ENCODE measurements at regions of chr6 and their contacts with region 1.

Region 1: DNA sequence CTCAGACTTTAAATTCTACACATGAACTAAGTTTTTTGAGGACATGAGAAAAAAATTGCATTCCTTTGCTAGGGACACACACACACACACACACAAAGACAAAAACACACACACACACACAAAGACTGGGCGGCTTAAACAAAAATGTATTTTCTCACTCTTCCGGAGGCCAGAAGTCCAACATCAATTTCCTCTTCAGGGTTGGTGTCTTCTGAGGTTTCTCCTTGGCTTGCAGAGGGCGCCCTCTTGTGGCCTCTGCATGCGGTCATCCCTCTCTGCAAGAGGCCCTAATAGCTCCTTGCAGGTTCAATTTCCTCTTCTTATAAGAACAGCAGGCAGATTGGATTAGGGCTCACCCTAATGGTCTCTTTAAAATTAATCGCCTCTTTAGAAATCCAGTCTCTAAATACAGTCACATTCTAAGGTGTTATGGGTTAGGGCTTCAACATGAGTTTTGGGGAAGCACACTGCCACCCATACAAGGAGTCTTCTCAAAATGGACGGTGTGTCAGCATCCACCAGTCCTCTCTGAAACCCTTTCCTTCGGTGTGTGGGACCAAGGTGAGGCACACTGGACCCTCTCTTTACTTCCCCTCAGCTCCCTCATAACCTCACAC is 61.4 kb downstream of the GPR6 start:
- DNase-seq: peak; percentile 65
- ATAC-seq: peak; percentile 96
- H3K4me3 ChIP-seq: peak overlapping the region; percentile 73
- H3K27ac ChIP-seq: peak overlapping the region; percentile 17; the same call in 1 of the 2 replicates
- H3K4me1 ChIP-seq: peaks cover 3% of the 10 kb centered on the region
- H3K27me3 ChIP-seq: no peaks in the 10 kb centered on the region
- CTCF ChIP-seq: peak; percentile 90 to 97 (median 92)
- EP300 ChIP-seq: no peak
- POLR2A ChIP-seq: no peak; the same call in 1 of the 2 replicates
- RAD21 ChIP-seq: peak; percentile 98

Region 2: DNA sequence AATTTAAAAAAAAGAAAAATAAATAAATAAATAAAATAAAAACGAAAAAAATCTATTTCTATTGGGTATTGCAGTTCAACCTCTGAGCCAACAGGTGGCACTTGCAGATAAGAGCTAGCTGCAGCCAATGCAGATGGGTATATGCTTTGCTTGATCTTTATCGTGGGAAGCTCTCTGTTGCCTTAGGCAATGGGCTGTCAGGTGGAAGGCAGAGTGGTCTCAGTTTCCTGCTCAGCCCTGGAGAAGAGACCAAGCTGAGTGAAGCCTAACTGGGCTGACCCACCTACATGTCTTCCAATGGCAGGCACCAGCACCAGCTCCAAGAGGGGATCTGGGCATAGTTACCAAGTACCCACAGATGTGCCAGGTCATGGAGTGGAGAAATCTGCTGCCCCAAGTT is 443.5 kb before region 1 on chr6:
- CTCF ChIA-PET with region 1: interaction called, 28 read pairs
- POLR2A ChIA-PET with region 1: interaction called, 3 read pairs
- RAD21 ChIA-PET with region 1: interaction called, 10 read pairs
- SMC1A ChIA-PET with region 1: interaction called, 4 read pairs
- in situ Hi-C with region 1: no loop called
- intact Hi-C with region 1: loop called (anchors 1 kb)
- DNase-seq: no peak
- ATAC-seq: peak; percentile 66
- H3K4me3 ChIP-seq: no peak overlapping the region
- H3K27ac ChIP-seq: no peak overlapping the region
- H3K4me1 ChIP-seq: no peaks in the 10 kb centered on the region
- H3K27me3 ChIP-seq: no peaks in the 10 kb centered on the region
- CTCF ChIP-seq: peak; percentile 37 to 45 (median 45); a peak in 5 of 6 replicates
- EP300 ChIP-seq: no peak
- POLR2A ChIP-seq: no peak
- RAD21 ChIP-seq: peak; percentile 84

Region 3: GRCh38 chr6:109713097-109713496 is 326.4 kb before region 1 on chr6:
- CTCF ChIA-PET with region 1: interaction called, 24 read pairs
- POLR2A ChIA-PET with region 1: no interaction called
- RAD21 ChIA-PET with region 1: interaction called, 15 read pairs
- SMC1A ChIA-PET with region 1: interaction called, 20 read pairs
- in situ Hi-C with region 1: no loop called
- intact Hi-C with region 1: no loop called
- DNase-seq: no peak
- ATAC-seq: no peak
- H3K4me3 ChIP-seq: no peak overlapping the region
- H3K27ac ChIP-seq: no peak overlapping the region
- H3K4me1 ChIP-seq: no peaks in the 10 kb centered on the region
- H3K27me3 ChIP-seq: no peaks in the 10 kb centered on the region
- CTCF ChIP-seq: no peak
- EP300 ChIP-seq: no peak
- POLR2A ChIP-seq: no peak
- RAD21 ChIP-seq: no peak

Region 4: GRCh38 chr6:110020888-110021287 is 18.6 kb before region 1 on chr6:
- CTCF ChIA-PET with region 1: interaction called, 16 read pairs
- POLR2A ChIA-PET with region 1: no interaction called
- RAD21 ChIA-PET with region 1: interaction called, 3 read pairs
- SMC1A ChIA-PET with region 1: interaction called, 3 read pairs
- in situ Hi-C with region 1: no loop called
- intact Hi-C with region 1: no loop called
- DNase-seq: no peak
- ATAC-seq: peak; percentile 33; the same call in 1 of the 3 replicates
- H3K4me3 ChIP-seq: no peak overlapping the region
- H3K27ac ChIP-seq: no peak overlapping the region
- H3K4me1 ChIP-seq: no peaks in the 10 kb centered on the region; the same call in 1 of the 2 replicates
- H3K27me3 ChIP-seq: no peaks in the 10 kb centered on the region; a peak in 1 of 4 replicates
- CTCF ChIP-seq: no peak
- EP300 ChIP-seq: no peak
- POLR2A ChIP-seq: no peak
- RAD21 ChIP-seq: no peak

Region 5: DNA sequence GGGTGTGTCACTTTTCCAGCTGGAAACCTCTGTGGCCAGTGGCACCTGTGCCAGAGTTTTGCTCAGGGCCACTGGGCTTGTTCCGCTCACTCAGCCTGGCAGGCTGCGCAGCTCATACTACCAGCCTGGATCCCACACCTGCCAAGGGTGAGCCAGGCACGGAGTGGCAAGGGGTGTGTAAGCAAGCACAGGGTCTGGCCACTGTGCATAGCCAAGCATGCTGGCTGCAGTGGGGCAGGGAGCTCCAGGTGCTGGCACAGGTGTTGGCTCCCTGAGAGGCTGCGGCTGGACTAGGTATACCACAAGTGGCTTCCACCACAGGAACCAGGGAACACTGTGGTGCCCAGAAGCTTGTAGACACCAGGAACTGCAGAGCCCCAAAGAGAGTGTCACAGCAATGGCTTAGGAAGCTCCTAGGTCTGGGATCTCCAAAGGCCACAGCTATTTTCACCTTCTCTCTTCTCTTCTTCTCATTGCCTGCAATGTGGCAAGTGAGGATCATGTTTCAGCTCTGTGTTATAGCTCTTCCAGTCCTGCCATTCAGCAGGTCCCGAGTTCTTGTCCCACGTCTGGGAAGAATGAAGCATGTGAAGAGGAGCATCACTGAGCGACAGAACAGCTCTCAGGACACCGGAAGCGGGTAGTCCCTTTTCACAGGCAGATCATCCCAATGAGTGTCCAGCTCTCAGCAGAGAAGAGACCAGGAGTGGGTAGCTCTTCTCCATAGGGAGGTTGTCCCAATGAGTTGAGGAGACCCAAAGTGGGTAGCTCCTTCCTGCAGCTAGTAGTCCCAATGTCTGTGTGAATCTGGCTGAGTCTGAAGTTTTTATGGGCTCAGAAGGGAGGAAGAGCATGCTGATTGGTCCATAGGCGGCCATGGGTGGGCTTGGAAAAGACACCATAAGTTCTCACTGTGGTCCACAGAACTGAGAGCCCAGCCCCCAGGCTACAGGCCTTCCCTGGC is 98.7 kb after region 1 on chr6:
- CTCF ChIA-PET with region 1: no interaction called
- POLR2A ChIA-PET with region 1: no interaction called
- RAD21 ChIA-PET with region 1: no interaction called
- SMC1A ChIA-PET with region 1: no interaction called
- in situ Hi-C with region 1: no loop called
- intact Hi-C with region 1: no loop called
- DNase-seq: no peak
- ATAC-seq: no peak
- H3K4me3 ChIP-seq: no peak overlapping the region
- H3K27ac ChIP-seq: no peak overlapping the region
- H3K4me1 ChIP-seq: no peaks in the 10 kb centered on the region
- H3K27me3 ChIP-seq: no peaks in the 10 kb centered on the region
- CTCF ChIP-seq: no peak
- EP300 ChIP-seq: no peak
- POLR2A ChIP-seq: no peak
- RAD21 ChIP-seq: no peak

Region 6: GRCh38 chr6:110179401-110180227 is 140.1 kb after region 1 on chr6 and contains the start of gene WASF1:
- CTCF ChIA-PET with region 1: interaction called, 7 read pairs
- POLR2A ChIA-PET with region 1: no interaction called
- RAD21 ChIA-PET with region 1: interaction called, 7 read pairs
- SMC1A ChIA-PET with region 1: interaction called, 5 read pairs
- in situ Hi-C with region 1: no loop called
- intact Hi-C with region 1: loop called (anchors 5 kb)
- DNase-seq: peak; percentile 76
- ATAC-seq: peak; percentile 92
- H3K4me3 ChIP-seq: peak within 1 kb of the TSS; percentile 83
- H3K27ac ChIP-seq: peak within 1 kb of the TSS; percentile 77
- H3K4me1 ChIP-seq: no peaks in the 10 kb centered on the region; the same call in 1 of the 2 replicates
- H3K27me3 ChIP-seq: no peaks in the 10 kb centered on the region
- CTCF ChIP-seq: no peak
- EP300 ChIP-seq: 0 out of 4 replicates have a peak, but pooled peaks of 1 of the 2 experiments have one; percentile 1
- POLR2A ChIP-seq: no peak
- RAD21 ChIP-seq: no peak
- polyA plus RNA-seq, gene WASF1: 1.7 to 3.5 TPM

Measured in GM12878 (cell line).